ENCODE measurements at regions of chrX and their contacts with region 1.

Region 1: DNA sequence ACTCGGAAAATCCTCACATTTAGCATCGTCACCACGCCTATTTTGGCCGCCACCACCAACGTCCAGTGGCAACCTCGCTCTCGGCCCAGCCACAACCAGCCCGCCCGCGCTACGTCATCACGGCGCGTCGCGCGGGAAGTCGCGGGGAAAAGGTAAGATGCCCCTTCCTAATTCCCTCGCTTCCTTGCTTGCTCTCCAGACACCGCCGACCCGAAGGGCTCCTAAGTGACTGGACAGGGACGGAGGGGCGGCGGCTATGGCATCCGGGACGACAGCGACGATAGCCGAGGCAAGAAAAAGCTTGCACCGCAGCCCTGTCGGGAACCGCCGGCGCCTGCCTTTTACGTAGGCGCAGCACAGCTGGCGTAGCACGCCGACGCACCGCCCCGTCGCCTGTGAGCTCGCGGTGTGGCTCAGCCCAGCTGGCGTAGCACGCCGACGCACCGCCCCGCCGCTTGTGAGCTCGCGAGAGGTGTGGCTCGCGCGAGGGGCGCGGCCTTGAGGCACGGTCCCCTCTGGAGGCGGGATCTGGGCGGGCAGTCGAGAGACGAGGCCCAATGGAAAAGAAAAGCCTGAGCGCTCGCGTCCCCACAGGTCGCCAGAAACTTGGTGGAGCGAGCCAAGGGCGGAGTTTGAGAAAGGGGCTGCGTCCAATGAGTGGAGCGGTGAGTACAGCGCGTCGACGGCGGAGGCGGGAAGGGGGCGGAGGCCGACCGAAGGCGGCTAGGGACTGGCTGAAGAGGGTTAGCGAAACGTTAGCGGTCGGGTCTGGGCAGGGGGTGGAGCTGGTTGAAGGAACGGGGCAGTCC is at the start of gene HDAC6:
- DNase-seq: peak; percentile 85
- ATAC-seq: peak; percentile 80
- H3K4me3 Mint-ChIP-seq: peak within 1 kb of the TSS; percentile 94
- H3K27ac Mint-ChIP-seq: peak within 1 kb of the TSS; percentile 98
- H3K4me1 Mint-ChIP-seq: peaks cover 18% of the 10 kb centered on the region
- H3K27me3 Mint-ChIP-seq: no peaks in the 10 kb centered on the region
- CTCF ChIP-seq: no peak
- total RNA-seq, gene HDAC6: 139 and 144 TPM in 2 replicates

Region 2: GRCh38 chrX:48475774-48476577 is 325.5 kb before region 1 on chrX and contains the start of gene FTSJ1:
- CTCF ChIA-PET with region 1: no interaction called
- POLR2A ChIA-PET with region 1: no interaction called
- intact Hi-C with region 1: loop called (anchors 5 kb)
- DNase-seq: peak; percentile 70
- ATAC-seq: peak; percentile 87
- H3K4me3 Mint-ChIP-seq: peak within 1 kb of the TSS; percentile 89
- H3K27ac Mint-ChIP-seq: peak within 1 kb of the TSS; percentile 93
- H3K4me1 Mint-ChIP-seq: peaks cover 23% of the 10 kb centered on the region
- H3K27me3 Mint-ChIP-seq: no peaks in the 10 kb centered on the region
- CTCF ChIP-seq: no peak
- total RNA-seq, gene FTSJ1: 39.9 and 44.5 TPM in 2 replicates

Region 3: GRCh38 chrX:48597353-48598264 is 203.9 kb before region 1 on chrX and contains the start of gene WDR13:
- CTCF ChIA-PET with region 1: no interaction called
- POLR2A ChIA-PET with region 1: no interaction called
- intact Hi-C with region 1: loop called (anchors 1 kb)
- DNase-seq: peak; percentile 79
- ATAC-seq: peak; percentile 83
- H3K4me3 Mint-ChIP-seq: peak within 1 kb of the TSS; percentile 97
- H3K27ac Mint-ChIP-seq: peak within 1 kb of the TSS; percentile 99
- H3K4me1 Mint-ChIP-seq: peaks cover 7% of the 10 kb centered on the region
- H3K27me3 Mint-ChIP-seq: no peaks in the 10 kb centered on the region
- CTCF ChIP-seq: no peak
- total RNA-seq, gene WDR13: 73.4 and 75.8 TPM in 2 replicates

Region 4: DNA sequence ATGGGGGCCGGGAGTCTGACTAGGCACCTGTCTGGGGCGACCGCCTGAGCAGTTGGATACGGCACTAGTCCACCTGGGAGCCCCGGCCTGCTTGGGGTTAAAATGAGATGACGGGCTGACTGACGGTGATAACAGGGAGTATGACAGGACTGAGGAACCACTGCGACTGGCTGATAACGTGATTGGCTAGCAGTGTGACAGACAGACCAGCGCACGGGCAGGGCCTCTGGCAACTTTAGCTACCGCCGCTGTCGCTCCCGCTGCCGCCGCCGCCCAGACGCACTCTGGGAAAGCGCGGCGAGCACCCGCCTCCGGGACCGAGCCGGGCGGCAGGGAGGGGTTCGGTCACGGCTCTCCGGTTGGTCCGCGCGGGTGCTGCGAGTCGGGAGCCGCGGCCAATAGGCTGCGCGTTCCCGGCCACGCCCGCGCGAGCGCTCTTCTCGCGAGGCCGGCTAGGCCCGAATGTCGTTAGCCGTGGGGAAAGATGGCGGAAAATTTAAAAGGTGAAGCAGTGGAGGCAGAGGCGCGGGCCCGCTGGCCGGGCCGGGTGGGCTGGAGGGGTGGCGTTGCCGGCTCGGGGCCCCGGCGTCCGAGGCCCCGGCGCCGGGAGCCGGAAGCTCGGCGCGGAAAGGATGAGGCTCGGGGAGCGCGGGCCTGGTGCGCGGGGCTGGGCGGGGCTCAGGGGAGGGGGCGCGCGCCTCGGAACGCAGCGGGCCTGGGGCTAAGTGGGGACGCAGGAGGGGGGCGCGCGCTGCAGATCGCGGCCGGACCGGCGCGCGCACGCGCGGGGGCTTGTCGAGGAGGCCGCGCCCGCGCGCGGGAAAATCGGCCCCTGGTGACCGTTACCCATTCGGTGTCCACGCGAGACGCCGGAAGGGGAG is 104.9 kb before region 1 on chrX and contains the start of gene SUV39H1:
- CTCF ChIA-PET with region 1: no interaction called
- POLR2A ChIA-PET with region 1: interaction called, 8 read pairs
- intact Hi-C with region 1: loop called (anchors 1 kb)
- DNase-seq: peak; percentile 70
- ATAC-seq: peak; percentile 96
- H3K4me3 Mint-ChIP-seq: peak within 1 kb of the TSS; percentile 88
- H3K27ac Mint-ChIP-seq: peak within 1 kb of the TSS; percentile 91
- H3K4me1 Mint-ChIP-seq: peaks cover 19% of the 10 kb centered on the region
- H3K27me3 Mint-ChIP-seq: no peaks in the 10 kb centered on the region
- CTCF ChIP-seq: no peak
- total RNA-seq, gene SUV39H1: 9.1 and 10.8 TPM in 2 replicates

Region 5: DNA sequence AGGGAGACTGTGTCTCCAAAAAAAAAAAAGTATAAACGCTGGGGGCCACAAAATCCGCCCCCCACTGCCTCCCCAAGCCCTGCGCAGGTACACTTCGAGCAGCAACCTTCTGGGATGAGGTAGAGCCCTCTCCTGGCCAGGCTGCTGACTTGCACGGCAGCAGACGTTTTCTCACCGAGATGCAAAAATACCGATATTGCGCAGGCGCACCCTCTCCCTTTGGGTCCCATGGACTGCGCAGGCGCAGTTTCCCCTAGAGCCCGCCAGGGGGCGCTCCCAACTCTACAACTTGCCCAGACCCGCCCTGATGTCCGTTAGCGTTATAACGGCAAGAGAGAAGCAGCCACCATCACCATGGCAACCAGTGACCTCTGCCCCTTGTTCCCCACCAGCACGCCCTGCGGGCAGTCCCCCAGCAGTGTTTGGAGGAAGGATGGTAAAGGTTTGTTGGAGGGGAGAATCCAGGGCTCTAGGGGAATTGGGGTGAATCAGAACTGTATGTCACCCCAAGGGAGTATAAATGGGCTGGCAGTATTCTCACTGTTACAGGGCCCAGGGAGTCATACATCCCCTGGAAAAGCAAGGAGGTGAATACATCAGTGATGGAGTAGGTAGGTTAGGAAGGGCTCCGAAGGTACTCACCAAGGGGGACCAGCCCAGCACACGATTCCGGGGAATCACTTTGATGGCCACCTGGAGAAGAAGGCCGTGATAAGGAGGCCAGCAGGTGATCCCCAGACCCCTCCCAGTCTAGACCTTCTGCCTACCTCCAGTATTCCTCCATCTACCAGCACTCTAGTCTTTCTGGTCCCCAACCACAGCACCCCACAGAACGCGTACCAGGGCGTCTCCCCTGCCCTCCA is 115.9 kb after region 1 on chrX:
- CTCF ChIA-PET with region 1: no interaction called
- POLR2A ChIA-PET with region 1: interaction called, 5 read pairs
- intact Hi-C with region 1: loop called (anchors 2 kb)
- DNase-seq: peak; percentile 71
- ATAC-seq: peak; percentile 46
- H3K4me3 Mint-ChIP-seq: peak overlapping the region; percentile 97
- H3K27ac Mint-ChIP-seq: peak overlapping the region; percentile 95
- H3K4me1 Mint-ChIP-seq: peaks cover 54% of the 10 kb centered on the region
- H3K27me3 Mint-ChIP-seq: no peaks in the 10 kb centered on the region
- CTCF ChIP-seq: peak; percentile 22

Region 6: DNA sequence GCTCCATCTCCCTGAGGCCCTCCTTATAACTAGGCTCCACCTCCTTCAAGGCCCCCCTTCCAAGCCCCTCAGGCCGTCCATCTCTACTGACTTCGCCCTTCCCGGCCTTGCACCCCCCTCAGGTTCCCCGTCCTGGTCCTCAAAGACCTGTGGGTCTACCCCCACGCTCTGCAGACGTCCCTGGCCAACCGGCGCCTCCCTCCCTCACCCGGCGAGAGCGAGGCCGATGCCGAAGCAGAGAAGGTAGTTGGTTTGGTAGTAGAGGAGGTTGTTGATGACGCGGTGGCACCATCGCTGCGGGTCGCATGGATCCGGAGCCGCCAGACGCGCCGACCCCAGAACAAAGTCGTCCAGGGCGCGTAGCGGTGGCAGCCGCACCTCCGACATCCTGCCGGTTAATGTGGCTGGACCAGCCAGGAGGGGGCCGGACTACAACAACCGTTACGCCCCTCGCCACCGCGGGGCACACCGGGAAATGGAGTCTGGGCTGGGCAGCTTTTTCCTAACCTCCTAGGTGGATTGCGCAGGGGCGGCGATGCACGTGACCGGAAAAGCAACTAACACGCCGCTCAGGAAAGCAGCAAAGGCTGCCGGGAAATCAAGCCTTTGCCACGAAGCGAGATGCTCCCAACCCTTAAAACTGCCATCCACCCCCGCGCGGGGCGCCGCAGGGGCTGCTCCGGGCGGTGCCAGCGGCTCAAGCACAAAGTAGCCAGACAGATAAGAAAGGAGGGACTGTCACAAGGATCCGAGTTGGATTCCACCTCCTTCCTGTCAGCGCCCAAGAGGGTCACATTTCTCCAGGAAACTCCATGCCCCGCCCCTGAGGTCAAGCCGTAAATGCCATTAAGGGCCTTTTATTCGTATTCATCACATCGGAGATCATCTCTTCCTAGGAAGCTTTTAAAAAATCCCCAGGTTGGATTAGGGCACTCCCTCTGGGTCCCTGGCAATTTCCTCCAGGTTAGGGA is 272.4 kb after region 1 on chrX and contains the start of gene PRAF2:
- CTCF ChIA-PET with region 1: no interaction called
- POLR2A ChIA-PET with region 1: no interaction called
- intact Hi-C with region 1: loop called (anchors 10 kb)
- DNase-seq: peak; percentile 76
- ATAC-seq: peak; percentile 99
- H3K4me3 Mint-ChIP-seq: peak within 1 kb of the TSS; percentile 84
- H3K27ac Mint-ChIP-seq: peak within 1 kb of the TSS; percentile 72
- H3K4me1 Mint-ChIP-seq: peaks cover 23% of the 10 kb centered on the region
- H3K27me3 Mint-ChIP-seq: no peaks in the 10 kb centered on the region
- CTCF ChIP-seq: no peak
- total RNA-seq, gene PRAF2: 10.6 and 11.6 TPM in 2 replicates